ENCODE measurements at regions of chr14 and their contacts with region 1.

Region 1: DNA sequence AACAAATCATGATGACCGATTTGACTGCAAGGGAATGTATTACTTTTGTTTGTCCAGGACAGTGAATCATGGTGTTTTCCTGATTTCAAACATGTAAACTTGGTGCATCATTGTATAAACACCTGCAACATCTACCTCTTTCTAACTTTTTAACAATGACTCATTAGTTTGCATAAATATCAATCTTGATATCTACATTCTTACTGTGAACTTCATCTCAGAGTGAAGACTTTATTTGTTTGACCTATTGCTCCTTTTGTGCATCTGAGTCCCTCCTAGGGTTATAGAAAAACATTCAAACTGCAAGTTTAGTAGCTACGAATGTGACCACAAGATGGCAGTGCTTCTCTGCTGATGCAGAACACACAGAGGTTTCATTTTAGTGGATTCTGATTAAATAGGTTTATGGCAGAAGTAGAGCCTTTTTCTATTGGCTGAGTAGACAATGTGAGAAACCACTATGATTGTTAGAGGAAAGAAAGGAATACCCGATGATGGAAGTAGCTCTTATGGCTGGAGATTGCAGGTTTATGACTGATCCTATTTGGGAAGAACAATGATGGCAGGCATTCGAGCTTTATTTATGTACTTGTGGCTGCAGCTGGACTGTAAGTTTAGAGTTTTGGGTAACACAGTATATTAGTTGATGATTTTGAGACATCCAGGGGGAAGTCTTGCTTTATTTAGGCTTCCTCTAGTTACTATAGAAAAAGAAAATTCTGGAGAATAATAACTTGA is 244.2 kb upstream of the OR4E1 start:
- DNase-seq: peak; percentile 91
- H3K4me3 ChIP-seq: no peak overlapping the region
- H3K27ac ChIP-seq: peak overlapping the region; percentile 86
- H3K4me1 ChIP-seq: peaks cover 60% of the 10 kb centered on the region
- H3K27me3 ChIP-seq: no peaks in the 10 kb centered on the region
- CTCF ChIP-seq: peak; percentile 66 to 69
- POLR2A ChIP-seq: peak; percentile 16

Region 2: GRCh38 chr14:21579976-21580375 is 337.9 kb before region 1 on chr14 and contains the start of gene OR10G3:
- CTCF ChIA-PET with region 1: no interaction called
- POLR2A ChIA-PET with region 1: no interaction called
- dilution Hi-C with region 1: no loop called
- intact Hi-C with region 1: no loop called
- DNase-seq: no peak
- H3K4me3 ChIP-seq: no peak within 1 kb of the TSS
- H3K27ac ChIP-seq: no peak within 1 kb of the TSS
- H3K4me1 ChIP-seq: no peaks in the 10 kb centered on the region
- H3K27me3 ChIP-seq: peaks cover 0 to 2% of the 10 kb centered on the region in 2 experiments
- CTCF ChIP-seq: no peak
- POLR2A ChIP-seq: no peak
- total RNA-seq, gene OR10G3: not detected in 2 replicates

Region 3: GRCh38 chr14:21874167-21874566 is 43.7 kb before region 1 on chr14:
- CTCF ChIA-PET with region 1: interaction called, 27 read pairs
- POLR2A ChIA-PET with region 1: no interaction called
- dilution Hi-C with region 1: no loop called
- intact Hi-C with region 1: no loop called
- DNase-seq: peak; percentile 60
- H3K4me3 ChIP-seq: peak overlapping the region in 1 of 3 experiments; percentile 48
- H3K27ac ChIP-seq: peak overlapping the region; percentile 60
- H3K4me1 ChIP-seq: peaks cover 17% of the 10 kb centered on the region
- H3K27me3 ChIP-seq: no peaks in the 10 kb centered on the region
- CTCF ChIP-seq: no peak
- POLR2A ChIP-seq: no peak

Region 4: DNA sequence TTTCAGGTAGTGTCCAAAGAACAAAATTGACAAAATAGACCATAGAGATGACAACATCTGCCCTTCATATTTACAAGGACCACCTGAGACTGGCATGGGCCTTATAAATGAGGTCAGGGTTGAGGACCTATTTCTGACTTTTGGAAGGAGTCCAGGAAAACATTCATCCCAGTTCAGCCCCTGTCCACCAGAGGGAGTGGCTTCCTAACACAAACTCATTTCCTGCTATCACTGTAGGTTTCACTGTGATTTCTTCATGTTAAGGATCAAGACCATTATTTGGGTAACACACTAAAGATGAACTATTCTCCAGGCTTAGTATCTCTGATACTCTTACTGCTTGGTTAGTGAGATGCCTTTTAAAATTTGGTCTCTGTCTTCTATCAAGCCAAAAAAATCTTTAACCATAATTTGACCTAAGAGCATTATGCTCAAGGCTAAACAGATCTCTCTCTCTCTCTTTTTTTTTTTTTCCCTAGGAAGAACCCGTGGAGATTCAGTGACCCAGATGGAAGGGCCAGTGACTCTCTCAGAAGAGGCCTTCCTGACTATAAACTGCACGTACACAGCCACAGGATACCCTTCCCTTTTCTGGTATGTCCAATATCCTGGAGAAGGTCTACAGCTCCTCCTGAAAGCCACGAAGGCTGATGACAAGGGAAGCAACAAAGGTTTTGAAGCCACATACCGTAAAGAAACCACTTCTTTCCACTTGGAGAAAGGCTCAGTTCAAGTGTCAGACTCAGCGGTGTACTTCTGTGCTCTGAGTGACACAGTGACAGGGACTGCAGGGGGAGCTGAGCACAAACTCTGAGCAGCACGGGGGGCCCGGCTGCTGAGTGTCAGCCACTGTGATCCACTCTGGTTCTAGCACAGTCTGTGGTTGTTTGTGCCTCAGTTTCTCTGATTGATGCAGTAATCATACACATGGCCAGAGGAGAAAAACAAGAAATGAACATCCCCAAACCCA is 23.3 kb after region 1 on chr14:
- CTCF ChIA-PET with region 1: interaction called, 13 read pairs
- POLR2A ChIA-PET with region 1: no interaction called
- dilution Hi-C with region 1: no loop called
- intact Hi-C with region 1: no loop called
- DNase-seq: peak; percentile 27
- H3K4me3 ChIP-seq: no peak overlapping the region
- H3K27ac ChIP-seq: no peak overlapping the region
- H3K4me1 ChIP-seq: peaks cover 14% of the 10 kb centered on the region
- H3K27me3 ChIP-seq: no peaks in the 10 kb centered on the region
- CTCF ChIP-seq: peak; percentile 44 to 51
- POLR2A ChIP-seq: no peak

Region 5: GRCh38 chr14:22039938-22040775 is 122.3 kb after region 1 on chr14:
- CTCF ChIA-PET with region 1: interaction called, 23 read pairs
- POLR2A ChIA-PET with region 1: no interaction called
- dilution Hi-C with region 1: no loop called
- intact Hi-C with region 1: no loop called
- DNase-seq: peak; percentile 32
- H3K4me3 ChIP-seq: no peak overlapping the region
- H3K27ac ChIP-seq: no peak overlapping the region
- H3K4me1 ChIP-seq: no peaks in the 10 kb centered on the region
- H3K27me3 ChIP-seq: peaks cover 4 to 5% of the 10 kb centered on the region in 2 experiments
- CTCF ChIP-seq: peak; percentile 51 to 60
- POLR2A ChIP-seq: no peak

Region 6: GRCh38 chr14:22185191-22185590 is 267.3 kb after region 1 on chr14:
- CTCF ChIA-PET with region 1: no interaction called
- POLR2A ChIA-PET with region 1: no interaction called
- dilution Hi-C with region 1: no loop called
- intact Hi-C with region 1: loop called (anchors 5 kb)
- DNase-seq: peak; percentile 13
- H3K4me3 ChIP-seq: no peak overlapping the region
- H3K27ac ChIP-seq: peak overlapping the region; percentile 43
- H3K4me1 ChIP-seq: peaks cover 10% of the 10 kb centered on the region
- H3K27me3 ChIP-seq: peaks cover 0 to 2% of the 10 kb centered on the region in 2 experiments
- CTCF ChIP-seq: peak in 1 of 2 donors; percentile 6
- POLR2A ChIP-seq: no peak

Region 7: GRCh38 chr14:22556990-22557623 is 639.2 kb after region 1 on chr14:
- CTCF ChIA-PET with region 1: no interaction called
- POLR2A ChIA-PET with region 1: no interaction called
- dilution Hi-C with region 1: no loop called
- intact Hi-C with region 1: loop called (anchors 10 kb)
- DNase-seq: peak; percentile 71
- H3K4me3 ChIP-seq: peak overlapping the region in 2 of 3 experiments; percentile 10 to 14
- H3K27ac ChIP-seq: peak overlapping the region; percentile 88
- H3K4me1 ChIP-seq: peaks cover 52% of the 10 kb centered on the region
- H3K27me3 ChIP-seq: no peaks in the 10 kb centered on the region
- CTCF ChIP-seq: peak; percentile 84 to 99
- POLR2A ChIP-seq: no peak